Naive thymus-derived CD4-positive, alpha-beta T cell (primary cell): ENCODE measurements at regions of chr17 and their contacts with region 1.

Region 1: DNA sequence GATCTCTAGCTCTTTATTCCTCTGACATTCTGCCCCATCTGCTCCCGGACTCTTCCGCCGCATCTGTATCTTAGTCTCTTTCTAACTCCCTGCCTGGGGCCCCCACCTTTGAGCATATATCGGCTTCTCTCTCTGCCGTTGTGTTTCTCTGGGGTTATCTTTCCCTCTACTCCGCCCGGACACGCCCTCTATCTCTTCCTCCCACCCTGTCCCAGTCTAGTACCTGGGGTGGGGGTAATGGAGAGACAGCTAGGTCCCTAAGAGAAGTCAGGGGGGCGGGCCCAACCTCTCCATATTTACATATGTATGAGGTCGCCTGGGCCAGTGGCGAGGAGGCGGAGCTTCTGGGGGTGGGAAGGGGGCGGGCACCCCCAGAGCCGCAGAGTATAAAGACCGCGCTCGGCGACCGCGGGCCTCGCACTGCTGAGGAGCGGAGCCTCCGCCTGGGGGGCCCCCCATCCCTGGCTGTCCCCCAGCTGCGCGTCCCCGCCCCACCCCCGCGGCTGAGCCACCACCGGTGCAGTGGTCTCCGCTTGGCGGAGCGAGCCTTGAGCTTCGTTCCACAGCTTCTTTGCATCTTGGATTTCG is at the start of gene ATP1B2:
- DNase-seq: peak; percentile 44 to 89 (median 66)
- ATAC-seq: peak; percentile 95
- H3K4me3 ChIP-seq: peak within 1 kb of the TSS; percentile 60
- H3K4me3 Mint-ChIP-seq: peak within 1 kb of the TSS; percentile 84 to 94 (median 90)
- H3K27ac ChIP-seq: no peak within 1 kb of the TSS
- H3K27ac Mint-ChIP-seq: peak within 1 kb of the TSS in 5 of 9 donors; percentile 7 to 70 (median 59)
- H3K4me1 ChIP-seq: peaks cover 11 to 21% of the 10 kb centered on the region in 2 donors
- H3K4me1 Mint-ChIP-seq: peaks cover 10 to 21% (median 15%) of the 10 kb centered on the region in 7 donors
- H3K27me3 ChIP-seq: peaks cover 0 to 15% of the 10 kb centered on the region in 2 donors
- H3K27me3 Mint-ChIP-seq: peaks cover 28 to 70% (median 39%) of the 10 kb centered on the region in 5 donors
- total RNA-seq, gene ATP1B2: 0.12 to 1.1 (median 0.29) TPM

Region 2: DNA sequence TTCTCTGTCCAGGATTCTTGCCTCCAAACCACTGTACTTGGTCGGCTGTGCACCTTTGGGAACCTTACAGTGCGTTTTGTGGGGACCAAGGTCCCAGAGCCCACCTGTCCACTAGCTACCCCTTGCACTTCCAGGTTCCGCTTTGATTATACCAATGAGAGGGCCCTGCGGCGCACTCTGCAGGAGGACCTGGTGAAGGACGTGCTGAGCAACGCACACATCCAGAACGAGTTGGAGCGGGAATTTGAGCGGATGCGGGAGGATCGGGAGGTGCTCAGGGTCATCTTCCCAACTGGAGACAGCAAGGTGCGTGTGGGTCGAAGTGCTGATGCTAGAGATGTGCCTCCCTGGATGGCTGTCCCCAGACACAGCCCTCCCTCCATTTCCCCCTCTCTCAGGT is 147.6 kb before region 1 on chr17:
- CTCF ChIA-PET with region 1: no interaction called
- POLR2A ChIA-PET with region 1: no interaction called
- intact Hi-C with region 1: no loop called
- DNase-seq: peak in 2 of 9 donors; percentile 17 to 27
- ATAC-seq: peak; percentile 43
- H3K4me3 ChIP-seq: no peak overlapping the region
- H3K4me3 Mint-ChIP-seq: no peak overlapping the region
- H3K27ac ChIP-seq: no peak overlapping the region
- H3K27ac Mint-ChIP-seq: no peak overlapping the region
- H3K4me1 ChIP-seq: no peaks in the 10 kb centered on the region
- H3K4me1 Mint-ChIP-seq: peaks cover 0 to 3% (median 0%) of the 10 kb centered on the region in 7 donors
- H3K27me3 ChIP-seq: no peaks in the 10 kb centered on the region
- H3K27me3 Mint-ChIP-seq: no peaks in the 10 kb centered on the region

Region 3: GRCh38 chr17:7627250-7628121 is 23.1 kb before region 1 on chr17 and contains the start of gene SAT2:
- CTCF ChIA-PET with region 1: interaction called, 3 read pairs
- POLR2A ChIA-PET with region 1: interaction called, 14 read pairs
- intact Hi-C with region 1: loop called (anchors 1 kb)
- DNase-seq: peak; percentile 47 to 87 (median 72)
- ATAC-seq: peak; percentile 97
- H3K4me3 ChIP-seq: peak within 1 kb of the TSS; percentile 79
- H3K4me3 Mint-ChIP-seq: peak within 1 kb of the TSS; percentile 90 to 96 (median 94)
- H3K27ac ChIP-seq: peak within 1 kb of the TSS; percentile 93
- H3K27ac Mint-ChIP-seq: peak within 1 kb of the TSS; percentile 75 to 95 (median 87)
- H3K4me1 ChIP-seq: peaks cover 5% of the 10 kb centered on the region in 2 donors
- H3K4me1 Mint-ChIP-seq: peaks cover 7 to 19% (median 17%) of the 10 kb centered on the region in 7 donors
- H3K27me3 ChIP-seq: no peaks in the 10 kb centered on the region
- H3K27me3 Mint-ChIP-seq: no peaks in the 10 kb centered on the region
- total RNA-seq, gene SAT2: 26.5 to 95.0 (median 77.2) TPM